ENCODE measurements at regions of chr16 and their contacts with region 1.

Region 1: GRCh38 chr16:64250866-64251265 is 871.0 kb downstream of the CDH11 start:
- DNase-seq: no peak

Region 2: GRCh38 chr16:64074706-64075105 is 176.2 kb before region 1 on chr16:
- intact Hi-C with region 1: no loop called
- DNase-seq: no peak

Region 3: GRCh38 chr16:64287655-64288528 is 37.0 kb after region 1 on chr16:
- intact Hi-C with region 1: loop called (anchors 5 kb)
- DNase-seq: no peak

Region 4: GRCh38 chr16:64437706-64438324 is 186.9 kb after region 1 on chr16:
- intact Hi-C with region 1: loop called (anchors 10 kb)
- DNase-seq: no peak

Measured in cardiac septum (tissue), 1 donor.